Activated T-helper 1 cell treated with anti-CD3 and anti-CD28 coated beads, Interleukin-12 subunit alpha, Interleukin-12 subunit beta, Interleukin-2, Interleukin-4 antibody, amounts not matched to agents 30 ng/mL and 10 ng/mL and 1 ng/mL, durations not matched to agents 14 hours and 24 hours and 36 hours (primary cell): ENCODE measurements at regions of chr14 and their contacts with region 1.

Region 1: DNA sequence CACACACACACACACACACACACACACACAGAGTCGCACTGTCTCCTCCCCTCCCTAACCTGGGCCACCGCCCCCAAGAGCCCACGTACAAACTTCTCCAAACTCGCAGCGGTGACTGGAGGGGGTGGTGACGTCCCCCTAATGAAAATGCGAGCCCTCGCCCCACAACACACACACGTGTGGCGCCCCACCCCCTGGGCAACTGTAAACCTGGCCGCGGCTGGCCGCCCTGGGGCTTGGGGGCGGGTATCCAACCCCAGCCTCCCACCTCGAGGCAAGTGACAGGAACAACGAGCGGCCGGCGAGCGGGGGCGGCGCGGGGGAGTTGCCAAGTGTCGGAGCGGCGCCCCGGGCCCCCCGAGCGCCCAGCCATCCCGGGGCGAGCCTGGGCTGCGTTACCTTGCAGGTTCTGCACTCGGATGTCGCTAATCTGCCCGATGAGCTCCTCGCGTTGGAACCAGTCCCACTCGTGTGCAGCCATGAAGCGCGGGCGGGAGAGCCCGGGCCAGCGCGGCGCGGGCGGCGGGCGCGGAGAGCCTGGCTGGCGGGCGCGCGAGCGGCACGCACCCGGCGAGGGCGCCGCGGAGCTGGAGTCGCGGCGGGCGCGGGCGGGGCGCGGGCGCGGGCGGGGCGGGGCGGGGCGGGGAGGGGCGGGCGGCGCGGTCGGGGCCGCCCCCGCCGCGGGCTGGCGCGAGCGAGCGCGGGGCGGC is at the start of gene CLMN:
- DNase-seq: peak; percentile 13
- H3K4me3 Mint-ChIP-seq: peak within 1 kb of the TSS; percentile 69
- H3K27ac Mint-ChIP-seq: peak within 1 kb of the TSS; percentile 30
- H3K4me1 Mint-ChIP-seq: peaks cover 6% of the 10 kb centered on the region
- H3K27me3 Mint-ChIP-seq: peaks cover 32% of the 10 kb centered on the region
- total RNA-seq, gene CLMN: 0.66 and 0.80 TPM in 2 replicates

Region 2: DNA sequence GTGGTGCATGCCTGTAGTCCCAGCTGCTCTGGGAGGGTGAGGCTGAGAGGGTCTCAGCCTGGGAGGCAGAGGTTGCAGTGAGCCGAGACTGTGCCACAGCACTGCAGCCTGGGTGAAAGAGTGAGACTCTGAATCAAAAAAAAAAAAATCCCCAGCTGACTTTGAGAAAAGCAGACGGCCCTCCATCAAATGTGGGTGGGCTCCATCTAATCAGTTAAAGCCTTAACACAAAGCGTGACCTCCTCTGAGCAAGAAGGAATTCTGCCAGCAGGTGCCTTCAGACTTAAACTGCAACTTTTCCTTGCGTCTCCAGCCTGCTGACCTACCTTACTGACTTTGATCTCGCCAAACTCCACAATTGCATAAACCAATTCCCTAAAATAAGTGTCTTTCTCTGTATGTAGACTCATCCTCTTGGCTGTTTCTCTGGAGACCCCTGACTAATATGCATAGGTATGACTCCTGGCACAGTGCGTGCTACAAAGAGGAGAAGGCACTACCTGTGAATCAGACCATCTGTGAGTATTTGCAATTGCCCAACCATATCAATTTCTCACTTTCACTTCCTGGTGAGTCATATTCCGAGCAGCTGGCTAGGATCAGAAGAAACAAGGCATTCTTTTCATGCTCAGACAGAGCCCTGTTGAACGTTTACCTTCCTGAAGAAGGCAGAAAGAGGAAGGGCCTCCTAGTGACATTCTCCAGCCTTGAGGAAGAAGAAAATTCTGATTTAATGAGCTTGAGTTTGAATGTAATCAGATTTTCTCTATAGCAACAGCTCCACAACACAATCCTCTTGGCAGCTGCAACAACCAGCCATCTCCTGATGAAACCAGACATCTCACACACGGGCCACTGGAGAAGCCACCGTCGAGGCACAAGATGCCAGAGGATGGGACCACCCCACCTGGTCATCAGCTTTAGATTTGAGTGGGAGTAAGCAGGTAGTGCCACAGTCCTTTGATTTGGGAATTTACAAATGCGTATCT is 54.1 kb before region 1 on chr14:
- intact Hi-C with region 1: loop called (anchors 1 kb)
- DNase-seq: peak; percentile 27
- H3K4me3 Mint-ChIP-seq: peak overlapping the region; percentile 5
- H3K27ac Mint-ChIP-seq: peak overlapping the region; percentile 32
- H3K4me1 Mint-ChIP-seq: peaks cover 39% of the 10 kb centered on the region
- H3K27me3 Mint-ChIP-seq: peaks cover 4% of the 10 kb centered on the region

Region 3: GRCh38 chr14:95307402-95308062 is 11.9 kb before region 1 on chr14:
- intact Hi-C with region 1: no loop called
- DNase-seq: no peak
- H3K4me3 Mint-ChIP-seq: no peak overlapping the region
- H3K27ac Mint-ChIP-seq: no peak overlapping the region
- H3K4me1 Mint-ChIP-seq: no peaks in the 10 kb centered on the region
- H3K27me3 Mint-ChIP-seq: peaks cover 8% of the 10 kb centered on the region

Region 4: DNA sequence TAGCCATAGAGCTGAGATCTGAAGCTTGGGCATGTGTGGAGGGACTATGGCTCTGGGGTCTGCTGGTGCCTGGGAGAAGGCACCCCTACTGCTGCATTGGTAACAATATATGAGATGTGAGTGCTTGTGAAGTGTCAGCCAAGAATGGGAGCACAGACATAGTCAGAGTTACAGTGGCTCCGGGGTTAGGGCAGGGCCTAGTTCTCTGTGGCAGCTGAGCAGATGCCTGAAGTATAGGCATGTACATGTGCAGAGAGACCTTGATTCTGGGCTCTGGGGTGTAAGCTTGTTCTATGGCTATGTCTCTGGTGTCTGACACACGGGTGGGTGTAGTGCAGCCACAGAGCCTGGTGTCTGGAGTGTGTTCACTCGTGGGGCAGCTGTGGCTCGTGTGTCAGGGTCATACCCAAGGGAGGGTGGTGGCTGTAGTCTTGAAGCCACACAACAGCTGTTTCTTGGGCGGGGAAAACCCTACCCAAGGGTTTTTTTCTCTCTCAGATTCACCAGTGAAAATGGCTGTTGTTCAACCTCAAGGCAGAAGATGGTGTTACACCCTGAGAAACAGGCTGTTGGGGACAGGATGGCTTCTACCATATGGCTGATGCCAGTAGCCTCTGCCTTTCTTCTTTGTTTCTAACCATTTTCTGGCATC is 406.3 kb after region 1 on chr14:
- intact Hi-C with region 1: no loop called
- DNase-seq: no peak
- H3K4me3 Mint-ChIP-seq: no peak overlapping the region
- H3K27ac Mint-ChIP-seq: no peak overlapping the region
- H3K4me1 Mint-ChIP-seq: no peaks in the 10 kb centered on the region
- H3K27me3 Mint-ChIP-seq: peaks cover under 1% of the 10 kb centered on the region

Region 5: DNA sequence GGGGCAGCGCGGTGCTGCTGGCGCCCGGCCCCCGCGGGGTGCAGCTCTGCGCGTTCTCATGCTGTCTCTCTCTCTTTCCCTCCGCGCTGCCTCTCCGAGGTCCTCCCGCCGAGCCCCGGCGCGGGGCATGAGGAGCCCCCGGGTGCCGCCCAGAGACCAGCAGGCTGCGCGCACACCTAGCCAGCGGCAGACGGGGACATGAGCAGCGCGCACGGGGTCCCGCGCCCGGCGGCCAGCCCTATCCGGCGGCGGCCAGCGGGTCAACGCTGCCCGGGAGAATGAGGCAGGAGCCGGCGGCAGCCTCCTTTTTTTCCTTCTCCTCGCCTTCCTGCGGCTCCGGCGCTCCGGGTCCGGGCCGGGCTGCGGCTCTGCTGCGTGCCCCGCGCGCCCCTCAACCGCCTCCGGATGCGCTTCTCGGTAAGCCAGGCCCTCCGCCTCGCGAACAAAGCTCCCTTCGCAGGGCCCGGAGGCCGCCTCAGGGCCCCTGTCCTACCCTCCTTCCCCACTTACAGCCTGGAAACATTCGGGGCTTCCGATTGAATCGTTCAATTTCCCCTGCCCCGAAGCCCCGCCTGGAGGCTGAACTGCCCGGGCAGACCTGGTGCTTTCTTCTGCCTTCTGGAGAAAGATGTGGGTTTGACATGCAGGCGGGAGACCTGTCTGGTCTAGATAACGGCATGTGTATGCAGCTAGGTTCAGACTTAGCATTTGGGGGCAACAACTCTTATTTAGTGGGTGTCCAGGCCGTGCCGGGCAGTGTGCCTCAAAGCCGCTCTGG is 557.5 kb after region 1 on chr14 and contains the start of gene TUNAR:
- intact Hi-C with region 1: no loop called
- DNase-seq: no peak
- H3K4me3 Mint-ChIP-seq: no peak within 1 kb of the TSS
- H3K27ac Mint-ChIP-seq: no peak within 1 kb of the TSS
- H3K4me1 Mint-ChIP-seq: no peaks in the 10 kb centered on the region
- H3K27me3 Mint-ChIP-seq: peaks cover 31% of the 10 kb centered on the region
- total RNA-seq, gene TUNAR: not detected in 2 replicates